ENCODE measurements at regions of chr10 and their contacts with region 1.

Region 1: GRCh38 chr10:92573798-92574547 is at the start of gene IDE:
- DNase-seq: peak; percentile 89
- H3K4me3 ChIP-seq: peak within 1 kb of the TSS; percentile 83
- H3K27ac ChIP-seq: peak within 1 kb of the TSS; percentile 93
- H3K4me1 ChIP-seq: peaks cover 17% of the 10 kb centered on the region
- H3K27me3 ChIP-seq: no peaks in the 10 kb centered on the region
- CTCF ChIP-seq: peak; percentile 91
- total RNA-seq, gene IDE: 87.8 and 92.1 TPM in 2 replicates

Region 2: GRCh38 chr10:92087750-92088395 is 486.1 kb before region 1 on chr10:
- CTCF ChIA-PET with region 1: no interaction called
- POLR2A ChIA-PET with region 1: no interaction called
- intact Hi-C with region 1: loop called (anchors 5 kb)
- DNase-seq: peak; percentile 88
- H3K4me3 ChIP-seq: no peak overlapping the region
- H3K27ac ChIP-seq: no peak overlapping the region
- H3K4me1 ChIP-seq: no peaks in the 10 kb centered on the region
- H3K27me3 ChIP-seq: no peaks in the 10 kb centered on the region
- CTCF ChIP-seq: peak; percentile 79

Region 3: DNA sequence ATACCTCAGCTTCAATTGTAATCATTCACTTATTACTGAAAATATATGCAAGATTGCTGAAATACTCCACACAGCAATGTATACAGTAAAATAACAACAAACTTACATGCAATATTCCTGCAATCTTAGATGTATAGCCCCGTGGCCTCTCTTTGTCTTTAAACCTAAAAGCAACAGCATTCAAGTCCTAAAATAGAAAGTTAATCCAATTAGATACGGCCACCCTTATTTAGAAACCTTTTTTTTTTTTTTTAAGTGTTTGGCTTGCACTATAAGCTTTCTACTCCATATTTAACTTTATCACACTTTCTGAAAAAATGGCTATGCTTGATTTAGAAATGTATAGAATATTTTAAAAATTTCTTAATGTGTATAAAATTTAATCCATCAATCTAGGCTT is 67.6 kb before region 1 on chr10:
- CTCF ChIA-PET with region 1: no interaction called
- POLR2A ChIA-PET with region 1: no interaction called
- intact Hi-C with region 1: no loop called
- DNase-seq: peak; percentile 71
- H3K4me3 ChIP-seq: peak overlapping the region; percentile 21
- H3K27ac ChIP-seq: peak overlapping the region; percentile 63
- H3K4me1 ChIP-seq: peaks cover 24% of the 10 kb centered on the region
- H3K27me3 ChIP-seq: no peaks in the 10 kb centered on the region
- CTCF ChIP-seq: no peak

Region 4: DNA sequence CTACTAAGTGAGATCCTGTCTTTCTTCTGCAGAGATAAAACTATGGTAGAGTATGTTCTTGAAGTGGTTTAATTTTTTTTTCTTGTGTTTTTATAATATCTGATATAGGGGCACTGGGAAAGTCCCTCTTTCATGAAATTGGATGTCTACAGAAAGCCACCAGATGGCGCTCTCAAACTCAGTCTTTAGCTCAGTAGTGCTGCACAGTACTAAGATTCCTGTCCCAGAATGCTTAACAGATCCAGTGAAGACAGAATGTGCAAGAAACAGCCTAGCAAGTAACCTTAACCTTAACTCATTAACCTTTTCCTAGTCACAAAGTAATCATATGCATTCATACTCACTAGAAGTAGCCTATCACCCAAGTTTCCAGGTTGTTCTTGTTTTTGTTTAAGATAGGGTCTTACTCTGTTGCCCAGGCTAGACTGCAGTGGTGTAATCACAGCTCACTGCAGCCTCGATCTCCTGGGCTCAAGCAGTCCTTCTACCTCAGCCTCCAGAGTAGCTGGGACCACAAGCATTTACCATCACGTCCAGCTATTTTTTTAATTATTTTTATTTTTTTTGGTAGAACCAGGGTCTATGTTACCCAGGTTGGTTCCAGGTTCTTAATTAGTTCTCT is 56.8 kb before region 1 on chr10:
- CTCF ChIA-PET with region 1: interaction called, 29 read pairs
- POLR2A ChIA-PET with region 1: interaction called, 3 read pairs
- intact Hi-C with region 1: loop called (anchors 1 kb)
- DNase-seq: peak; percentile 80
- H3K4me3 ChIP-seq: no peak overlapping the region
- H3K27ac ChIP-seq: no peak overlapping the region
- H3K4me1 ChIP-seq: no peaks in the 10 kb centered on the region
- H3K27me3 ChIP-seq: no peaks in the 10 kb centered on the region
- CTCF ChIP-seq: peak; percentile 89

Region 5: DNA sequence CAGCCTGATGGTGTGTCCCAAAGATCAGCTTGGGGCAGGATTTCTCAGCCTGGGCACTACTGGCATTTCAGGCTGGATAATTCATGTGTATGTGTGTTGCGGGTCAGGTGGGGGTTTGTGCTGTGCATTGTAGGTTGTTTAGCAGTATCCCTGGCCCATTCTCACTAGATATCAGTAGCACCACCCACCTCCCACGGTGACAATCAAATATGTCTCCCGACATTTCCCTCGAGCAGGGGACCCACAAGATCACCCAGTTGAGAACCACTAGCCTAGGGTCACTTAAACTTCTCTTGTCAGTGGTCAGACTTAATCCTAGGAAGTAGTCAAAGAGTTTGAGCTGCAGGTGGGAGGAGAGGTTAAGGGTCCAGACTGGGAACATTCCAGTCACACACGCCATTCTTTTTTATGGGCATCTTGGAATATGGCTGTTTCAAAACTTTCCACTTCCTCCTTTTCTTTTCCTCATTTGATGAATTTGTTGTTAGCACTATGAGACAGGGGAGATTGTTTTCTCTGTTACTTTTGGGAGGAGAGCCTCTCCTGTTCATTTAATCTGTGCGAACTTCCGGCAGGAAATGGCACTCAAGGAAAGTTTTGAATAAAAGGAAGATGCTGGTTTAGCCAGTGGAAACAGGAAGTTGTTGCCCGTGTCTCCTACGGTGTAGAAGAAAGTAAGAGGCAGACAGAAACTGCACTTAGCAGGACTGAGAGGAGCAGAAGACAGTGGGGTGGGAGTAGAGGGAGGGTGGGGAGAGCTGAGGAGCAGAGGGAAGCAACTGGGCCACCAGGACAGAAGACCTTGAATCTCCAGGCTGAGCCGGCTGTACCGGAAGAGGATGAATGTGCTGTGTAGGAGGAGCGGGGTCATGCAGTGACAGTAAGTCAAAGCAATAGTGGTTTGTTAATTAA is 256.8 kb after region 1 on chr10:
- CTCF ChIA-PET with region 1: no interaction called
- POLR2A ChIA-PET with region 1: no interaction called
- intact Hi-C with region 1: no loop called
- DNase-seq: peak; percentile 93
- H3K4me3 ChIP-seq: no peak overlapping the region
- H3K27ac ChIP-seq: peak overlapping the region; percentile 81
- H3K4me1 ChIP-seq: peaks cover 38% of the 10 kb centered on the region
- H3K27me3 ChIP-seq: no peaks in the 10 kb centered on the region
- CTCF ChIP-seq: no peak

Measured in A673 (cell line).